Activated CD4-positive, alpha-beta memory T cell treated with anti-CD3 and anti-CD28 coated beads for 36 hours (primary cell): ENCODE measurements at regions of chr6 and their contacts with region 1.

Region 1: GRCh38 chr6:484086-484745 is 92.7 kb downstream of the IRF4 start:
- DNase-seq: peak; percentile 75
- H3K4me3 Mint-ChIP-seq: peak overlapping the region; percentile 58
- H3K27ac Mint-ChIP-seq: peak overlapping the region; percentile 99
- H3K4me1 Mint-ChIP-seq: peaks cover 73% of the 10 kb centered on the region
- H3K27me3 Mint-ChIP-seq: no peaks in the 10 kb centered on the region

Region 2: DNA sequence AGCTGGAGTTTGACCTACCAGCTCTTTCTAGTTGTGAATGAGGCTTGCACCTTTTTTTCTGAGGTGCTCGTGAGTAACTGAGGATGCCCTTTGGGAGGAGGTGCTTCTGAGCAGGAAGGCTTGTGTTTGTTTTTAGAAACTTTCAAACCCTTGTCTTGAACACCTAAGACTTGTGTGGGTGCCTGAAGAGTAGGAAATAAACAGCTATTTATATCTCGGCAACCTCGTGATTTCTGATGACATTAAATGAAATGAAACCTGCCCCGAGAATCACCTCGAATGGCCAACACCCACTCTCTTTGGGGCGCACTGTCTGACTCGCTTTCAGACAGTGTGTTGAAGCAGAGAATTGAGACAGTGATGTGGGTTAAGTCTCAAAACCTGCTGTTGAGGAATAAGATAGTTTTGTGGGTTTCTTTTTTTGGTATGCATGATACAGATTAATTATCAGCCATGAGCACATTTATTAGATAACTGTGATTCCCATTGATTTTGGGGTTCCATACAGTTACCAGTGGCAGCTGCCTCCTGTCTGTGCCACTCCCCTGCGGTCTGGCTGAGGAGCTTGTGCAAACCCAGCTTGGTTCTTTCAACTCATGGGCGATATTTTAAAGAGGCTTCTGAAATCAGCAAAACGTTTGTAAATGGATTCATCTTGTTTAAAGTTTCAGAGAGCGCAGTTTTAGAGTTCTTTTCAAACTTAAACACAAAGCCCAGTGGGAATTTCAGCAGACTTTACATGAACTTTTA is 84.3 kb before region 1 on chr6:
- CTCF ChIA-PET with region 1: no interaction called
- POLR2A ChIA-PET with region 1: interaction called, 136 read pairs
- intact Hi-C with region 1: no loop called
- DNase-seq: peak; percentile 76
- H3K4me3 Mint-ChIP-seq: peak overlapping the region; percentile 64
- H3K27ac Mint-ChIP-seq: peak overlapping the region; percentile 88
- H3K4me1 Mint-ChIP-seq: peaks cover 94% of the 10 kb centered on the region
- H3K27me3 Mint-ChIP-seq: no peaks in the 10 kb centered on the region

Region 3: DNA sequence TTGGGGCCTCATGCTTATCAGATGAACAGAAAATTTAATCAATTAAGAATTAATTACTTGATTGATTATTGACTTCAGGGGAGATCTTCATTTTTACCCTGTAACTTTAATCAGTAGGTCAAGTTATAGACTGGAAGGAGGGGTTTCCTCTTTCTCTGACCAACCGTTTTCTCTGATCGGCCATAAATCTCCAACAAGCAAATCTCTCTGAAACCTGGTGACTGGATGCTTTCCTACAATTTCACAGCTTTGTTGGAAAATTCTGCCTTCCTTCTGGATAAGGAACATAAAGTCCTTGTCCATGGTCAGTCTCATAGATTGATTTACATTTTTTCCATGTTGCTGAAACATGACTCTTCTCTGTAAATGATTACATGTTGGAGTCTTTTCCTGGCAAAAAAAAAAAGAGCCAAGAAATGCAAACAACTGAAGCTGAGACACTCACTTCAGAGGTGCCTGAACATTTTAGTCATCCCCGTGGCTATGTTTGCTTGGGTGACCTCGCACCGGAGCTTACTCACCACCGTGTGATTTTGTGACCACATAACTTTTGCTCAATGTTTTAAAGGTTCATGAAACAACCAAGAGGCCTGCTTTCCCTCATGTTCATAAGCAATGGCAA is 61.7 kb before region 1 on chr6:
- CTCF ChIA-PET with region 1: interaction called, 4 read pairs
- POLR2A ChIA-PET with region 1: interaction called, 3 read pairs
- intact Hi-C with region 1: loop called (anchors 2 kb)
- DNase-seq: peak; percentile 87
- H3K4me3 Mint-ChIP-seq: no peak overlapping the region
- H3K27ac Mint-ChIP-seq: peak overlapping the region; percentile 87
- H3K4me1 Mint-ChIP-seq: peaks cover 30% of the 10 kb centered on the region
- H3K27me3 Mint-ChIP-seq: no peaks in the 10 kb centered on the region

Region 4: GRCh38 chr6:446418-447366 is 37.5 kb before region 1 on chr6:
- CTCF ChIA-PET with region 1: interaction called, 5 read pairs
- POLR2A ChIA-PET with region 1: interaction called, 38 read pairs
- intact Hi-C with region 1: loop called (anchors 1 kb)
- DNase-seq: peak; percentile 97
- H3K4me3 Mint-ChIP-seq: peak overlapping the region; percentile 77
- H3K27ac Mint-ChIP-seq: peak overlapping the region; percentile 97
- H3K4me1 Mint-ChIP-seq: peaks cover 55% of the 10 kb centered on the region
- H3K27me3 Mint-ChIP-seq: peaks cover 1% of the 10 kb centered on the region

Region 5: GRCh38 chr6:506508-506907 is 22.3 kb after region 1 on chr6:
- CTCF ChIA-PET with region 1: interaction called, 7 read pairs
- POLR2A ChIA-PET with region 1: interaction called, 32 read pairs
- intact Hi-C with region 1: loop called (anchors 1 kb)
- DNase-seq: peak; percentile 76
- H3K4me3 Mint-ChIP-seq: peak overlapping the region; percentile 30
- H3K27ac Mint-ChIP-seq: peak overlapping the region; percentile 100
- H3K4me1 Mint-ChIP-seq: peaks cover 95% of the 10 kb centered on the region
- H3K27me3 Mint-ChIP-seq: no peaks in the 10 kb centered on the region

Region 6: GRCh38 chr6:2186516-2186915 is 1702.3 kb after region 1 on chr6:
- CTCF ChIA-PET with region 1: no interaction called
- POLR2A ChIA-PET with region 1: no interaction called
- intact Hi-C with region 1: no loop called
- DNase-seq: no peak
- H3K4me3 Mint-ChIP-seq: no peak overlapping the region
- H3K27ac Mint-ChIP-seq: no peak overlapping the region
- H3K4me1 Mint-ChIP-seq: peaks cover 16% of the 10 kb centered on the region
- H3K27me3 Mint-ChIP-seq: peaks cover 15% of the 10 kb centered on the region